Endothelial cell of umbilical vein (primary cell): ENCODE measurements at regions of chr13 and their contacts with region 1.

Region 1: GRCh38 chr13:32581177-32581786 is 5.0 kb upstream of the PDS5B start:
- DNase-seq: peak; percentile 26
- H3K4me3 ChIP-seq: no peak overlapping the region
- H3K27ac ChIP-seq: no peak overlapping the region
- H3K4me1 ChIP-seq: peaks cover 10% of the 10 kb centered on the region
- H3K27me3 ChIP-seq: peaks cover 0 to 1% of the 10 kb centered on the region in 2 experiments
- CTCF ChIP-seq: peak; percentile 21 to 26
- POLR2A ChIP-seq: no peak

Region 2: DNA sequence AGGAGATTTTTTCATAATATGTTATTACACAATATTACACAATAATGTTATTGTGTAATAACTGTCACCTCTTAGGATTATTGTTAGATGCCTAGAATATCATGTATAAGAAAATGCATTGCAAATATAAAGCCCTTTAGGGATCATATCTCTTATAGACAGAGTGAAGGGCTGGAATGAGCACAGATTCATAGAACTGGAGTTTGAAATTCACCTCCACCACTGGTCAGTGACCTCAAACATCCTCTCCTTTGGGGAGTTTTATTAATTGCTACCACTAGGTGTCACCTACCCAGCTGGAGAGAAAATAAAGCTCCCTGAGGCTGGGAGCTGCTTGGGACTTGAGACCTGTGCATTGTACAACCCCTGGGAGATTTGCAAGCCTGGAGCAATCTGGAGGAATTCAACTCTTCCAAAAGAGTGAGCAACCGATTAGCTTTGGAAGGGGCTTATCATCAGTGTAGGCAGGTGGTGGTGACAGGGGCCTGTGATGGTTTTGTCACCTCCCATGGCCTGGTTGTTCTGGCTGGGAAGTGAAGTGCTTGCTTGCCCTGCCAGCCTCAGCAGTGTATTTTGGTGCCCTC is 580.0 kb before region 1 on chr13:
- CTCF ChIA-PET with region 1: interaction called, 35 read pairs
- POLR2A ChIA-PET with region 1: no interaction called
- dilution Hi-C with region 1: no loop called
- intact Hi-C with region 1: no loop called
- DNase-seq: peak; percentile 46
- H3K4me3 ChIP-seq: no peak overlapping the region
- H3K27ac ChIP-seq: no peak overlapping the region
- H3K4me1 ChIP-seq: no peaks in the 10 kb centered on the region
- H3K27me3 ChIP-seq: no peaks in the 10 kb centered on the region
- CTCF ChIP-seq: peak; percentile 50 to 57
- POLR2A ChIP-seq: no peak

Region 3: DNA sequence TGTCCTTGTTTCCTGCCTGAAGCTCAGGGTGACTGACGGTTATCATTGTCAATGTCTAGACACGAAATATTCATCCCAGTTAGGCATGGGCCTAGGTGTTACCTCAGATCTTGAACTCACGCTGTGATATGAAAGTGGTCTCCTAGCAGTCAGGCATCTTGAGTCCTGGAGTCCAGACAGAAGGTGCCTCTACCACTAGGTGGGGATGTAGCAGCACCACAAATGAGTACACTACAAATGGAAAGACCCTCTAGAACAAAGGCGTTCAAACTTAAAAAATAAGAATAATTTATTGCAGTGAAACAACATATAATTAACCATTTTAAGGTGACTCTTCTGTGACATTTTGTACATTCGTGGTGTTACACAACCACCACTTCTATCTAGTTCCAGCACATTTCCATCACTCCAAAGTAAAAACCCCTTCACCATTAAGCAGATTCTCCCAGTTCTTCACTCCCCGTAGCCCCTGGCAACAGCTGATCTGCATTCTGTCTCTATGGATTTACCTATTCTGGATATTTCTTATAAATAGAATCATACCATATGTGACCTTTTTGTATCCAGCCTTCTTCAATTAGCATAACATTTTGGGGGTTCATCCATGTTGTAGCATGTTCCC is 561.6 kb before region 1 on chr13:
- CTCF ChIA-PET with region 1: interaction called, 23 read pairs
- POLR2A ChIA-PET with region 1: no interaction called
- dilution Hi-C with region 1: no loop called
- intact Hi-C with region 1: loop called (anchors 1 kb)
- DNase-seq: peak; percentile 84
- H3K4me3 ChIP-seq: no peak overlapping the region
- H3K27ac ChIP-seq: no peak overlapping the region
- H3K4me1 ChIP-seq: no peaks in the 10 kb centered on the region
- H3K27me3 ChIP-seq: peaks cover 0 to 10% of the 10 kb centered on the region in 2 experiments
- CTCF ChIP-seq: peak; percentile 75 to 79
- POLR2A ChIP-seq: no peak

Region 4: GRCh38 chr13:32381539-32381938 is 199.7 kb before region 1 on chr13:
- CTCF ChIA-PET with region 1: interaction called, 34 read pairs
- POLR2A ChIA-PET with region 1: no interaction called
- dilution Hi-C with region 1: no loop called
- intact Hi-C with region 1: loop called (anchors 2 kb)
- DNase-seq: peak; percentile 12
- H3K4me3 ChIP-seq: no peak overlapping the region
- H3K27ac ChIP-seq: no peak overlapping the region
- H3K4me1 ChIP-seq: peaks cover 2% of the 10 kb centered on the region
- H3K27me3 ChIP-seq: no peaks in the 10 kb centered on the region
- CTCF ChIP-seq: peak; percentile 11 to 21
- POLR2A ChIP-seq: no peak

Region 5: DNA sequence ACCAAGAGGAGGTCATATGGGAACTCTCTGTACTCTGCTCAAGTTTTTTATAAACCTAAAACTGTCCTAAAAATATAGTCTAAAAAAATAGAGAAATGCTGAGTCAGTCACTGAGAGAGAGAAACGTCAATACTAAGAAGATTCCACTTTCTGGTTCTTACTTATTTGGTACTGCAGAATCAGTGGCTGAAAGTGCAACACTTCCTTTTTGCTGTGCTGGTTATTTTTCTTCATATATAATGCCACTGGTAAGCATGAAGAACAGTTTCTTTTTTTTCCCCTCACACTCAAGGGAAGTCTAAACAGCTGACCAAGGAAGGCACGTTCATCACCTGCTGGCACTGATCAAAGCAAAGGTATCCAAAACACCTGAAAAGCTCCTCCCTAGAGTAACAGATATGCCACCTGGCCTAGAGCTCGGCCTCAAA is 109.1 kb before region 1 on chr13:
- CTCF ChIA-PET with region 1: interaction called, 11 read pairs
- POLR2A ChIA-PET with region 1: no interaction called
- dilution Hi-C with region 1: no loop called
- intact Hi-C with region 1: no loop called
- DNase-seq: no peak
- H3K4me3 ChIP-seq: no peak overlapping the region
- H3K27ac ChIP-seq: no peak overlapping the region
- H3K4me1 ChIP-seq: no peaks in the 10 kb centered on the region
- H3K27me3 ChIP-seq: no peaks in the 10 kb centered on the region
- CTCF ChIP-seq: no peak
- POLR2A ChIP-seq: no peak